ENCODE measurements at regions of chr3 and their contacts with region 1.

Region 1: DNA sequence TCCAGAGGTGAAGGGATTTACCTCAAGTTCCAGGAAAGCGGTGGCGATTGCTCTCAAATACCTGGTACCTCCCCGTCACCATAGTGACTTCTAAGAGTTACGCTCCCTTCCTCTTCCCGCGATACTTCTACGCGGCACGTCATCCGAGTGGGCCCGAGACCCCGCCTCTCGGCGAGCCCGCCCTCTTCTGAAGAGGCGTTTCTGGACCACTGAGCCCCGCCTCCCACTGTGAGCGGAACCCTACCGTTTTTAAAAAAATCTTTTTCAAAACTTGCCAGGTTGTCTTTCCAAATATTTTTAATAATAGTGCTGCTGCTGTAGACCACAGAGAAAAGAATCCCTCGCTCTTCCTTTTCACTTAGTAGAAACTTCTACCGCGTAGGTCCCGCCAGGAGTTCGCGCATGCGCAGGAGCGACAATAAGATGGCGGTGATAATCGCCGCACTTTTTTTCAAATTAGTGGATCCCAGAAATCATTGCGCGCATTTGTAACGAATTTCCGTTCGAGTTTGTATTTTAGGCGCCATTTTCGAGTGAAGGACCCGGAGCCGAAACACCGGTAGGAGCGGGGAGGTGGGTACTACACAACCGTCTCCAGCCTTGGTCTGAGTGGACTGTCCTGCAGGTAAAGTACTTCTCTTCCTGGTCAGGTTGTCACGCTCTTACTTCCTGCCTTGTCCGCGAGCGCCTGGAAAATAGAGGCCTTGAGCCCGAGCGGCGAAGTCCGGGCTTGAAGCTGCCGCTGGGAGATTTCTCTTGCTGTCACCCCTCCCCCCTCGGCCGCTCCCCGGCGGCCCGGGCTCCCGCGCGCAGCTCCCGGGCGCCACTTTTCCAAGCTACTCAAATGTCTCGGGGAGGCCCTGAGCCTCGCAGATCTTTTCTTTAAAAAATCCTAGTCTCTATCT is at the starts of genes IFT80 and SMC4:
- DNase-seq: peak; percentile 96 to 97 (median 97)
- H3K4me3 ChIP-seq: peak within 1 kb of the TSS; percentile 68 to 86
- H3K4me3 Mint-ChIP-seq: peak within 1 kb of the TSS; percentile 91 to 100 (median 98)
- H3K27ac ChIP-seq: peak within 1 kb of the TSS; percentile 91
- H3K27ac Mint-ChIP-seq: peak within 1 kb of the TSS; percentile 97 to 100 (median 99)
- H3K4me1 ChIP-seq: peaks cover 37% of the 10 kb centered on the region
- H3K4me1 Mint-ChIP-seq: peaks cover 32 to 53% (median 40%) of the 10 kb centered on the region in 4 donors
- H3K27me3 ChIP-seq: no peaks in the 10 kb centered on the region
- H3K27me3 Mint-ChIP-seq: no peaks in the 10 kb centered on the region
- total RNA-seq, gene IFT80: 34.0 to 38.8 TPM
- total RNA-seq, gene SMC4: 72.0 to 74.3 TPM

Region 2: GRCh38 chr3:158801696-158802408 is 1597.5 kb before region 1 on chr3 and contains the start of gene MFSD1:
- CTCF ChIA-PET with region 1: no interaction called
- POLR2A ChIA-PET with region 1: no interaction called
- intact Hi-C with region 1: loop called (anchors 2 kb)
- DNase-seq: peak; percentile 86 to 92 (median 88)
- H3K4me3 ChIP-seq: peak within 1 kb of the TSS; percentile 68 to 98
- H3K4me3 Mint-ChIP-seq: peak within 1 kb of the TSS; percentile 89 to 93 (median 92)
- H3K27ac ChIP-seq: peak within 1 kb of the TSS; percentile 63
- H3K27ac Mint-ChIP-seq: peak within 1 kb of the TSS; percentile 71 to 97 (median 94)
- H3K4me1 ChIP-seq: peaks cover 36% of the 10 kb centered on the region
- H3K4me1 Mint-ChIP-seq: peaks cover 24 to 41% (median 35%) of the 10 kb centered on the region in 4 donors
- H3K27me3 ChIP-seq: no peaks in the 10 kb centered on the region
- H3K27me3 Mint-ChIP-seq: no peaks in the 10 kb centered on the region
- total RNA-seq, gene MFSD1: 31.7 to 33.7 TPM

Region 3: GRCh38 chr3:160225176-160226025 is 174.0 kb before region 1 on chr3 and contains the start of gene C3orf80:
- CTCF ChIA-PET with region 1: no interaction called
- POLR2A ChIA-PET with region 1: no interaction called
- intact Hi-C with region 1: loop called (anchors 5 kb)
- DNase-seq: peak in 4 of 5 donors; percentile 28 to 44 (median 36)
- H3K4me3 ChIP-seq: peak within 1 kb of the TSS in 1 of 2 donors; percentile 50
- H3K4me3 Mint-ChIP-seq: peak within 1 kb of the TSS; percentile 68 to 87 (median 82)
- H3K27ac ChIP-seq: no peak within 1 kb of the TSS
- H3K27ac Mint-ChIP-seq: peak within 1 kb of the TSS in 1 of 7 donors; percentile 27
- H3K4me1 ChIP-seq: peaks cover 18% of the 10 kb centered on the region
- H3K4me1 Mint-ChIP-seq: peaks cover 13 to 22% (median 15%) of the 10 kb centered on the region in 4 donors
- H3K27me3 ChIP-seq: peaks cover 22% of the 10 kb centered on the region
- H3K27me3 Mint-ChIP-seq: peaks cover 32 to 51% of the 10 kb centered on the region in 2 donors
- total RNA-seq, gene C3orf80: not detected

Region 4: DNA sequence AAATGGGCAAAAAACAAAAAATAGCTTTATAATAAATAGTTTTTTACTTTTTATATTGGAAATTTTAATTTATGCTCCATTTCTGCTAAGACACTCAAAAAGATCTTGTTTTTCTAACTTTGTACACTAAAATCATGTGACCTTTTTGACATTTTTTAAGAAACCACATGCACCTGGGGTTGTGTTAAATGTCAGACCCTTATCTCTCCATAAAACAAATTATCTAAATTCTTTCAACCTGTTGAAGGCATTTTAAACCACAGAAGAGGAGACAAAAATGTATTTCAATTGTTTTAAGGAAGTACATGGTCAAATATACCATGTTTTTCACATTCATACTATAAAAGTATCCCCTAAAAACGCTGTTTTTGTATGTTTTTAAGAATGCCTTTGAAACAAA is 29.6 kb before region 1 on chr3:
- CTCF ChIA-PET with region 1: interaction called, 3 read pairs
- POLR2A ChIA-PET with region 1: interaction called, 3 read pairs
- intact Hi-C with region 1: loop called (anchors 2 kb)
- DNase-seq: peak in 4 of 5 donors; percentile 36 to 43 (median 39)
- H3K4me3 ChIP-seq: no peak overlapping the region
- H3K4me3 Mint-ChIP-seq: peak overlapping the region in 7 of 8 donors; percentile 36 to 63 (median 53)
- H3K27ac ChIP-seq: no peak overlapping the region
- H3K27ac Mint-ChIP-seq: peak overlapping the region in 6 of 7 donors; percentile 31 to 88 (median 44)
- H3K4me1 ChIP-seq: peaks cover 19% of the 10 kb centered on the region
- H3K4me1 Mint-ChIP-seq: peaks cover 16 to 29% (median 19%) of the 10 kb centered on the region in 4 donors
- H3K27me3 ChIP-seq: no peaks in the 10 kb centered on the region
- H3K27me3 Mint-ChIP-seq: no peaks in the 10 kb centered on the region

Region 5: GRCh38 chr3:160449636-160450598 is 50.5 kb after region 1 on chr3 and contains the start of gene TRIM59:
- CTCF ChIA-PET with region 1: interaction called, 6 read pairs
- POLR2A ChIA-PET with region 1: interaction called, 35 read pairs
- intact Hi-C with region 1: loop called (anchors 1 kb)
- DNase-seq: peak; percentile 93 to 98 (median 97)
- H3K4me3 ChIP-seq: peak within 1 kb of the TSS; percentile 82 to 91
- H3K4me3 Mint-ChIP-seq: peak within 1 kb of the TSS; percentile 93 to 100 (median 98)
- H3K27ac ChIP-seq: peak within 1 kb of the TSS; percentile 81
- H3K27ac Mint-ChIP-seq: peak within 1 kb of the TSS; percentile 92 to 99 (median 97)
- H3K4me1 ChIP-seq: peaks cover 35% of the 10 kb centered on the region
- H3K4me1 Mint-ChIP-seq: peaks cover 18 to 48% (median 33%) of the 10 kb centered on the region in 4 donors
- H3K27me3 ChIP-seq: no peaks in the 10 kb centered on the region
- H3K27me3 Mint-ChIP-seq: no peaks in the 10 kb centered on the region
- total RNA-seq, gene TRIM59: 26.3 to 28.3 TPM

Region 6: GRCh38 chr3:160473978-160474377 is 74.6 kb after region 1 on chr3:
- CTCF ChIA-PET with region 1: no interaction called
- POLR2A ChIA-PET with region 1: no interaction called
- intact Hi-C with region 1: no loop called
- DNase-seq: no peak
- H3K4me3 ChIP-seq: no peak overlapping the region
- H3K4me3 Mint-ChIP-seq: no peak overlapping the region
- H3K27ac ChIP-seq: no peak overlapping the region
- H3K27ac Mint-ChIP-seq: no peak overlapping the region
- H3K4me1 ChIP-seq: no peaks in the 10 kb centered on the region
- H3K4me1 Mint-ChIP-seq: no peaks in the 10 kb centered on the region
- H3K27me3 ChIP-seq: no peaks in the 10 kb centered on the region
- H3K27me3 Mint-ChIP-seq: peaks cover 9 to 16% of the 10 kb centered on the region in 2 donors

Region 7: GRCh38 chr3:160565442-160566403 is 166.3 kb after region 1 on chr3 and contains the start of gene KPNA4:
- CTCF ChIA-PET with region 1: no interaction called
- POLR2A ChIA-PET with region 1: interaction called, 3 read pairs
- intact Hi-C with region 1: loop called (anchors 1 kb)
- DNase-seq: peak; percentile 96 to 97 (median 97)
- H3K4me3 ChIP-seq: peak within 1 kb of the TSS; percentile 40 to 72
- H3K4me3 Mint-ChIP-seq: peak within 1 kb of the TSS; percentile 94 to 99 (median 96)
- H3K27ac ChIP-seq: peak within 1 kb of the TSS; percentile 85
- H3K27ac Mint-ChIP-seq: peak within 1 kb of the TSS; percentile 96 to 99 (median 98)
- H3K4me1 ChIP-seq: peaks cover 48% of the 10 kb centered on the region
- H3K4me1 Mint-ChIP-seq: peaks cover 42 to 62% (median 53%) of the 10 kb centered on the region in 4 donors
- H3K27me3 ChIP-seq: no peaks in the 10 kb centered on the region
- H3K27me3 Mint-ChIP-seq: no peaks in the 10 kb centered on the region
- total RNA-seq, gene KPNA4: 46.1 to 50.1 TPM

Region 8: DNA sequence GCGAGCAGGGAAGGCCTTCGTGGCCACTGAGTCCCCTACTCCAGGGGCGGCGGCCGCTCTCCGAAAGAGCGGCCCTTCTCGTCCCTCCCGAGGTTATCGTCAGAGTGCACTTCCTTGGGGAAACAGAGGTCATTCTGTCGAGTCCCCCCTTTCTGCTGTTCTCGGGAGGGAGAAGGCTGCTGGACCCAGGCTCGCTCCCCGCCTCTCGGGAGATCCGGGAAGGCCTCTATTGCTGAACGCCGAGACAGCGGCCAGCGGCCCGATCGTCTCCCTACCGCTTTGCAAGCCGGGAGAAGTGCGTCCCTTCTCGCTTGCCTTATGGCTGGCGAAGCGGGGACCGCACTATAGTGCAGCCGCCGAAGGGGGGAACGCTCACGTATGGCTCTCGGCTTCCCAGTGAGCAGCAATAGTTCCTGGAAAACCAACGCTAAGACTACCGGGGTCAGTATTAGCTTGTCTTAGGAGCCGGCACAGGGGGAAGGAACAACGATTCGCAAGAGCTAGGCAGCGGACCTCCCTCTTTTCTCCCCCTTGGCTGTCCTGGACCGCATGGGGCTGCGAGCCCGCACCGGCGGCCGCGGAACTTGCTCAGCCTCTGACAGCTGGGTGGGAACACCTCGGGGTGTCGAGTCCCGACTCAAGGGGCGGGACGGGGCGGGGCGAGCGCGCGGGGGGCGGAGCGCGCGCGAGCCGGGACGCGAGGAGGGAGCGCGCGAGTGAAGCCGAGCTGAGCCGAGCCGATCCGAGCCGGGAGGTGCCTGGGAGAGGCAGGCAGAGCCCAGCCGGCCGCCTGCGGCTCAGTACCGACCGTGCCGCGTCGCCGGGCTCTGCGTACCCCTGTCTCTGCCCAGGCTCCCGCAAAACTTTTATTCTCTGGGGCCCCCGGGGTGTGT is 355.7 kb after region 1 on chr3:
- CTCF ChIA-PET with region 1: no interaction called
- POLR2A ChIA-PET with region 1: no interaction called
- intact Hi-C with region 1: loop called (anchors 1 kb)
- DNase-seq: peak; percentile 86 to 89 (median 88)
- H3K4me3 ChIP-seq: peak overlapping the region; percentile 67 to 96
- H3K4me3 Mint-ChIP-seq: peak overlapping the region; percentile 91 to 98 (median 94)
- H3K27ac ChIP-seq: peak overlapping the region; percentile 69
- H3K27ac Mint-ChIP-seq: peak overlapping the region; percentile 94 to 98 (median 97)
- H3K4me1 ChIP-seq: peaks cover 24% of the 10 kb centered on the region
- H3K4me1 Mint-ChIP-seq: peaks cover 17 to 37% (median 27%) of the 10 kb centered on the region in 4 donors
- H3K27me3 ChIP-seq: no peaks in the 10 kb centered on the region
- H3K27me3 Mint-ChIP-seq: peaks cover 0 to 5% of the 10 kb centered on the region in 2 donors

Measured in CD4-positive, alpha-beta memory T cell (primary cell).